Left ventricle myocardium superior (tissue), 1 donor: ENCODE measurements at regions of chr6 and their contacts with region 1.

Region 1: GRCh38 chr6:152552616-152553209 is 84.4 kb downstream of the SYNE1 start:
- DNase-seq: peak; percentile 72
- ATAC-seq: peak; percentile 84

Region 2: DNA sequence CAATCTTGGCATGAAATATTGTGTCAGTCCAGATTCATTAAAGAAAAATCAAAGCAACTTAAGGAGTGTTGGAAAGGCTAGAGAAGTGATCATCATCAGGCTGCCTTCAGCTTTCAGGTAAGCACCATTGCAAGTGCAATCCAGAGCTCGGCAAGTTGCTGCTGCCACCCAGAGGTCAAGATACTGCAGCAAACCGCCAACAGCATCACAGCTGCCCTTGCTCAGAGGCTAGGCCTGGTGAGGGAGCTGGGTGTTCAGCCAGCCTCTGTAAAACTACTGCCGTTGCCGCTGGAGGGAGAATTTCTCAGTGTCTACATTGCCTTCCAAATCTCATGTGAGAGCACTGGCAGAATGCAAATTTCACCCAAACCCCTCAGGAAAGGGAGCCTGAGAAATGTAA is 90.3 kb after region 1 on chr6:
- intact Hi-C with region 1: loop called (anchors 10 kb)
- DNase-seq: peak; percentile 61
- ATAC-seq: peak; percentile 88